Aorta (tissue), 5 donors: ENCODE measurements at regions of chr6 and their contacts with region 1.

Region 1: DNA sequence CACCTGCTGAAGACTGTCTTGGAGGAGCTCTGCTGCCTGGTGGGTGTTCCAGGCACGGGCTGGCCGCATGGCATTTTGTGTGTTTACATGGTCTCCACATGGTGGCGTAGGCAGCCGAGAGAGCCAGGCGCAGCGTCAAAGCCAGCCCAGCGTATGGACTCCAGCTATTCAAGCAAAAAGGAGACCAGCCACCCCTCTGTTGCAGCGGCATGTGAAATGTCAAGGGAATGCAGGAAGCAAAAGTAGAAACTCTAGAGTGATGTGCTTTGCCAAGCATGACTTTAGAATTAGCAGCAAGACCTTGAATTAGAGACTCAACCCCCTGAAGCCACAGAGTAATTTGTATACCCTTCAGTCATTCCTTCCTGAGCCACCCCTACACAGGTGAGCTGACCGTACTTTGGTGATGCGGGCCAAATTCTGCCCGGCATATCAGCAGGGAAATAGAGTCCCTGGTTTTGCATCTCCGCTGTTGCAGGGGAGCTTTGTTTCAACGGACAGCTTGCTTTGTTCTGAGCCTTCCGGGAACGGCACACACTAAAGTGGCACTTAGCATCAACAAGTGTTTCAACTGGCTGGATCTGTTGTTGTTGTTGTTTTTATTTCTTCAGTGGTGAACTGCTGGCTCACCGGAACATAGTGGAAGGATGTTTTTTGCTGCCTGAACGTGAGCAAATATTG is 48.5 kb downstream of the FNDC1 start:
- DNase-seq: no peak
- ATAC-seq: no peak
- H3K4me3 ChIP-seq: no peak overlapping the region
- H3K27ac ChIP-seq: no peak overlapping the region
- H3K4me1 ChIP-seq: peaks cover 0 to 3% of the 10 kb centered on the region in 2 donors
- H3K27me3 ChIP-seq: no peaks in the 10 kb centered on the region

Region 2: DNA sequence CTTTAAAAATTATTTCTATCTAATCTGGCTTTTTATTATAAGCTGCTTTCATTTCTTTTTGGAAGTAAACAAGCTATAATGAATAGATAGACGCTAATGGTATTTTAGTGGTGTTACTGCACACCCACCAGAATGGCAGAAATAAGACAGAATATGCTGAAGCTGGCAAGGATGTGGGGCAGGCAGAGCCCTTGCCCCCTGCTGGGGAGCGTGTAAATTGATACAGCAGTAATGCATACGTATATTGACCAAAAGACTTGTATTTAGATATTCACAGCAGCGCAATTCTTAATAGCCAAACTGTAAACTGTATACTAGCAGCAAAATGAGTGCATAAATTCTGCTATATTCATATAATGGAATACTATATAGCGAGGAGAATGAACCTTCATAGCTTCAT is 622.5 kb before region 1 on chr6:
- intact Hi-C with region 1: no loop called
- DNase-seq: no peak
- ATAC-seq: no peak
- H3K4me3 ChIP-seq: no peak overlapping the region
- H3K27ac ChIP-seq: no peak overlapping the region
- H3K4me1 ChIP-seq: no peaks in the 10 kb centered on the region
- H3K27me3 ChIP-seq: no peaks in the 10 kb centered on the region

Region 3: DNA sequence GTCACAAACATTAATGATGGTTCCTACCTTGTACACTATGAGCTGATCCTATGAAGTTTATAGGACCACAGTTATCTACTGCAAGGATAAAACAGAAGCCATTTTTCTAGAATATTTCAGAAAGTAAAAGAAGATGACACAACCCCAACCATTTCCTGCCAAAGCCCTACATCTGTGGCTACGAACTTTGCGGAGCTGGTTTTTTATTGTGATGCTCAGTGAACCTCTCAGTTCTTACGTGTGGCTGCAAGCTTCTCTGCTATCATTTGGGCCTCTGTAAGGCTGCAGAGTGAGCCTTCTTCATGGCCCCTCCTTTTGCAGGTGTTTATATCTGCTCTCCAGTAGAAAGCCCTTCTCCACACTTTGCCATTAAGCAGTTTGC is 155.2 kb before region 1 on chr6:
- intact Hi-C with region 1: no loop called
- DNase-seq: no peak
- ATAC-seq: no peak
- H3K4me3 ChIP-seq: no peak overlapping the region
- H3K27ac ChIP-seq: no peak overlapping the region
- H3K4me1 ChIP-seq: no peaks in the 10 kb centered on the region
- H3K27me3 ChIP-seq: peaks cover 0 to under 1% of the 10 kb centered on the region in 2 donors

Region 4: GRCh38 chr6:159261995-159262394 is 44.3 kb after region 1 on chr6:
- intact Hi-C with region 1: loop called in 1 of 2 experiments (anchors 2 kb)
- DNase-seq: no peak
- ATAC-seq: no peak
- H3K4me3 ChIP-seq: no peak overlapping the region
- H3K27ac ChIP-seq: no peak overlapping the region
- H3K4me1 ChIP-seq: peaks cover 0 to 4% of the 10 kb centered on the region in 2 donors
- H3K27me3 ChIP-seq: no peaks in the 10 kb centered on the region